ENCODE measurements at regions of chr12 and their contacts with region 1.

Region 1: GRCh38 chr12:4276524-4277204 is 3.1 kb downstream of the CCND2 start:
- DNase-seq: peak; percentile 82
- H3K4me3 ChIP-seq: peak overlapping the region; percentile 86
- H3K27ac ChIP-seq: peak overlapping the region; percentile 97
- H3K4me1 ChIP-seq: peaks cover 93% of the 10 kb centered on the region
- H3K27me3 ChIP-seq: peaks cover 41% of the 10 kb centered on the region
- CTCF ChIP-seq: peak; percentile 92

Region 2: GRCh38 chr12:3998968-3999826 is 277.5 kb before region 1 on chr12:
- intact Hi-C with region 1: loop called (anchors 10 kb)
- DNase-seq: no peak
- H3K4me3 ChIP-seq: no peak overlapping the region
- H3K27ac ChIP-seq: no peak overlapping the region
- H3K4me1 ChIP-seq: no peaks in the 10 kb centered on the region
- H3K27me3 ChIP-seq: peaks cover 33% of the 10 kb centered on the region
- CTCF ChIP-seq: no peak

Region 3: GRCh38 chr12:4107436-4107878 is 169.2 kb before region 1 on chr12:
- intact Hi-C with region 1: loop called (anchors 5 kb)
- DNase-seq: no peak
- H3K4me3 ChIP-seq: no peak overlapping the region
- H3K27ac ChIP-seq: no peak overlapping the region
- H3K4me1 ChIP-seq: peaks cover 4% of the 10 kb centered on the region
- H3K27me3 ChIP-seq: no peaks in the 10 kb centered on the region
- CTCF ChIP-seq: peak; percentile 59

Region 4: GRCh38 chr12:4191642-4192041 is 85.0 kb before region 1 on chr12:
- intact Hi-C with region 1: no loop called
- DNase-seq: no peak
- H3K4me3 ChIP-seq: no peak overlapping the region
- H3K27ac ChIP-seq: no peak overlapping the region
- H3K4me1 ChIP-seq: no peaks in the 10 kb centered on the region
- H3K27me3 ChIP-seq: peaks cover 58% of the 10 kb centered on the region
- CTCF ChIP-seq: no peak

Region 5: GRCh38 chr12:4370265-4370664 is 93.6 kb after region 1 on chr12:
- intact Hi-C with region 1: no loop called
- DNase-seq: no peak
- H3K4me3 ChIP-seq: no peak overlapping the region
- H3K27ac ChIP-seq: no peak overlapping the region
- H3K4me1 ChIP-seq: no peaks in the 10 kb centered on the region
- H3K27me3 ChIP-seq: peaks cover 20% of the 10 kb centered on the region
- CTCF ChIP-seq: no peak

Region 6: GRCh38 chr12:4526923-4527546 is 250.4 kb after region 1 on chr12:
- intact Hi-C with region 1: no loop called
- DNase-seq: no peak
- H3K4me3 ChIP-seq: no peak overlapping the region
- H3K27ac ChIP-seq: no peak overlapping the region
- H3K4me1 ChIP-seq: no peaks in the 10 kb centered on the region
- H3K27me3 ChIP-seq: no peaks in the 10 kb centered on the region
- CTCF ChIP-seq: peak; percentile 71